ENCODE measurements at regions of chr17 and their contacts with region 1.

Region 1: DNA sequence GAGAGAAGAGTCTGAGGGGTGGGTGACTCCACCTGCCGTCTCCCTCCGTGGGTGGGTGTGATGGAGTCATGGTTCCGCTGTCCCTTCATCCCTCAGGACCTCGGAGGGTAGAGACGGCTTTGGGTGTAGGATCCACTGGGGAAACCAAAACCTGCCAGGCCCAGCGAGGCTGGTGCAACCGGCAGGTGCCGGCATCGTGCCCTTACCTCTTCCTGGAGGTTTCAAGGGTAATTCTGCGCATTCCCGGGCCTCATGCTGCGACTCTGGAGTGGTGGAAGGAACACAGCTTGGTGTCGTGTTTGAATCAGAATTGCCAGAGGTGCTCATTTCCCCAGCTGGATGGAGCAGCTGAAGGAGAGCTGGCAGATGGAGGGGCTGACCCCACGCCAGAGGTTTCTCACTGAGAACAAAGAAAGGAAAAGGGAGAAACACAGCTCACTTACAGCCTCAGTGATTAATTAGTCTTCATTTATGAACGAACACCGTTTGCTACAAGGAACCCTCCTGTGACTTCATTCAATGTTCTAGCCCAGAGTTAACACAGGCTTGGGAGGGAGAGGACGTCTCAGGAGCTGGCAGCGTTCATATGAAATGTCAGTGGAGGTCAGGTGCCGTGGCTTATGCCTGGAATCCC is 16.3 kb upstream of the ATP2A3 start:
- DNase-seq: no peak
- ATAC-seq: no peak
- H3K4me3 Mint-ChIP-seq: no peak overlapping the region
- H3K27ac Mint-ChIP-seq: peak overlapping the region; percentile 72
- H3K4me1 Mint-ChIP-seq: peaks cover 37% of the 10 kb centered on the region
- H3K27me3 Mint-ChIP-seq: no peaks in the 10 kb centered on the region
- CTCF ChIP-seq: no peak

Region 2: DNA sequence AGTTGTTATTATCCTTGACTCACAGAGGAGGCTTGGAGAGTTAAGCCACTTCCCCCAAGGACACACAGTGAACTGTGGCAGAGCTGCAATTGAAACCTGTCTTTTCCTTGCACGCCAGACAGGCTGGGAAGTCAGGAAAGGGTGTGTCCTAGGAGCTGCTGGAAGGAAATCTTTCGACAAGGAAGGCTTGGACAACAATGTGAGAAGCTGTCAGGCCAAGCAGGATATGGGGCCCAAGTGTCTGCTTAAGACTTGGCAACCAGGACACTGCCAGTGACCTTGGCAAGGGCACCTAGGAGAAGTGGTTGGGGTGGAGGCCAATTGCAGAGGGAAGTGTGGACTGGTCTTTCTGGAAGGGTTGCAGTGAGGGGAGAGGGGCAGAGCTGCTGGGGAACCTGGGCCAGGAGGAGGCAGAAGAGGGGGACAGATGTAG is 85.6 kb before region 1 on chr17:
- CTCF ChIA-PET with region 1: no interaction called
- POLR2A ChIA-PET with region 1: no interaction called
- DNase-seq: no peak
- ATAC-seq: no peak
- H3K4me3 Mint-ChIP-seq: no peak overlapping the region
- H3K27ac Mint-ChIP-seq: no peak overlapping the region
- H3K4me1 Mint-ChIP-seq: peaks cover 26% of the 10 kb centered on the region
- H3K27me3 Mint-ChIP-seq: peaks cover 7% of the 10 kb centered on the region; the same call in 1 of the 2 replicates
- CTCF ChIP-seq: no peak

Region 3: DNA sequence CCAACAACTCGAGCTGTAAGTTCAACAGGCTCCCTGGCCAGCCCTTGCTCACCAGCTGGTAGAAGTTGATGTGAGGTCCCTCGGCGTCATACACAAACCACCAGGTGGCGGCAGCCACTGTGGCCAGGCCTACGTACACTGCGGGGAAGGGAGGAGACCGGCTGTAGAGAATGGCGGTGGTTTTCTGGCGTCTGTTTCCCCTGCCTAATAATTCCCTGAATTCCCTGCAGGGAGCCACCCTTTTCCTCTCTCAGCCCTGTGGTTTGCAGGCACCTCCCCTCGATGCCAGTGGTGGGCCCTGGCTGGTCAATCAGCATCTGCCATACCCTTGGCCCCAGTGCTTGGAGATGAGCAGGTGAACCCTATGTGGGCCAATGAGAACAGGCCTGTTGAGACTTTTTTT is 45.4 kb before region 1 on chr17:
- CTCF ChIA-PET with region 1: interaction called, 10 read pairs
- POLR2A ChIA-PET with region 1: no interaction called
- DNase-seq: peak; percentile 83
- ATAC-seq: peak; percentile 97
- H3K4me3 Mint-ChIP-seq: no peak overlapping the region
- H3K27ac Mint-ChIP-seq: no peak overlapping the region; the same call in 1 of the 2 replicates
- H3K4me1 Mint-ChIP-seq: no peaks in the 10 kb centered on the region
- H3K27me3 Mint-ChIP-seq: no peaks in the 10 kb centered on the region
- CTCF ChIP-seq: peak; percentile 46; the same call in 1 of the 2 replicates

Region 4: GRCh38 chr17:3965118-3965803 is 15.2 kb before region 1 on chr17:
- CTCF ChIA-PET with region 1: interaction called, 12 read pairs
- POLR2A ChIA-PET with region 1: interaction called, 4 read pairs
- DNase-seq: peak; percentile 78
- ATAC-seq: peak; percentile 85
- H3K4me3 Mint-ChIP-seq: peak overlapping the region; percentile 79
- H3K27ac Mint-ChIP-seq: peak overlapping the region; percentile 92; the same call in 1 of the 2 replicates
- H3K4me1 Mint-ChIP-seq: peaks cover 32% of the 10 kb centered on the region
- H3K27me3 Mint-ChIP-seq: peaks cover 12% of the 10 kb centered on the region
- CTCF ChIP-seq: no peak